ENCODE measurements at regions of chr17 and their contacts with region 1.

Region 1: DNA sequence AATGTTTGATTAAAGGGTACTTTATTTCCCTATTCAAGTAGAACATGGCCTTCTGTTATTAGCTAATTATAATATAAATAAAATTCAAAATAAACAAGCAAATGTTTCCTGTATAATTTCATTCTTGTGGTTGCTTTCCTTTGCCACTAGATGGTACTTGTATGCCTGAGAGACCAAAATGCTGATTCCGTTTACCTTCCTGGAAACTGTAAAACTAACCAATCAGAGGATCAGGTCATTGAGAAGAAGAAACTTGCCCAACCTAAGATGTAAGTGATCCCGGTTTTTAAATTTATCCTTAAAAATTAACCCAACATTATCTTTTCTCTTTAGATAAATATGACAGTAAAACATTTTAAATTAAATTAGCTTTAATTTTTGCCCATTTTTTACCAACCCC is 8.1 kb upstream of the ABCA5 start:
- DNase-seq: no peak
- ATAC-seq: peak; percentile 85
- H3K4me3 ChIP-seq: no peak overlapping the region
- H3K27ac ChIP-seq: no peak overlapping the region
- H3K4me1 ChIP-seq: no peaks in the 10 kb centered on the region
- H3K27me3 ChIP-seq: no peaks in the 10 kb centered on the region
- CTCF ChIP-seq: peak; percentile 26 to 81 (median 74)
- POLR2A ChIP-seq: no peak

Region 2: GRCh38 chr17:69154267-69154666 is 180.8 kb before region 1 on chr17:
- intact Hi-C with region 1: no loop called
- DNase-seq: no peak
- ATAC-seq: no peak
- H3K4me3 ChIP-seq: no peak overlapping the region
- H3K27ac ChIP-seq: no peak overlapping the region
- H3K4me1 ChIP-seq: no peaks in the 10 kb centered on the region
- H3K27me3 ChIP-seq: no peaks in the 10 kb centered on the region
- CTCF ChIP-seq: no peak
- POLR2A ChIP-seq: no peak

Region 3: DNA sequence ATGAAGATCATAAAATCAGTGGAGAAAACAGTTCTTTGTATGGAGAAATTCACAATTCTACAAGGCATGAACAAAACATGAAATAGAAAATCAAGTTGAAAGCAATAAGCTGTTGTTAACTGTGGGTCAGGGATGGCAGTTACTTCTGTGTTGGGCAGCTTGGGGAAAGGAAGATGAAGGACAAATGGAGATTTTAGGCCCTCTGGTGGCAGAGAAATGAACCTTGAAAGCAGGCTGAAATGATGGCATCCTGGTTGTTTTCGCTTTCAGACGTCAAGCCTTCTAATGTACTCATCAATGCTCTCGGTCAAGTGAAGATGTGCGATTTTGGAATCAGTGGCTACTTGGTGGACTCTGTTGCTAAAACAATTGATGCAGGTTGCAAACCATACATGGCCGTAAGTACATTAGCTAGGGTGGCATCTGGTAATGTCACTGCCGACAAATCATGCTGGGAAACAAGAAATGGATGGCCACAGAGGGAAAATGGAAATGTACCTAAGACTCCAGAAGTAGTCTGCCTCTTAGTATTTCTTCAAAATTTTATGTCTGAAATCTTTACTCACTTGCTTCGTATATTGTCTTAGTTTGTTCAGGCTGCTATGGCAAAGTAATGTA is 188.3 kb after region 1 on chr17:
- intact Hi-C with region 1: loop called (anchors 10 kb)
- DNase-seq: peak; percentile 35 to 63 (median 48)
- ATAC-seq: peak; percentile 65
- H3K4me3 ChIP-seq: no peak overlapping the region
- H3K27ac ChIP-seq: peak overlapping the region in 1 of 4 donors; percentile 6
- H3K4me1 ChIP-seq: no peaks in the 10 kb centered on the region
- H3K27me3 ChIP-seq: no peaks in the 10 kb centered on the region
- CTCF ChIP-seq: peak; percentile 52 to 91 (median 76)
- POLR2A ChIP-seq: no peak

Measured in body of pancreas (tissue), 4 donors.